ENCODE measurements at regions of chr4 and their contacts with region 1.

Region 1: DNA sequence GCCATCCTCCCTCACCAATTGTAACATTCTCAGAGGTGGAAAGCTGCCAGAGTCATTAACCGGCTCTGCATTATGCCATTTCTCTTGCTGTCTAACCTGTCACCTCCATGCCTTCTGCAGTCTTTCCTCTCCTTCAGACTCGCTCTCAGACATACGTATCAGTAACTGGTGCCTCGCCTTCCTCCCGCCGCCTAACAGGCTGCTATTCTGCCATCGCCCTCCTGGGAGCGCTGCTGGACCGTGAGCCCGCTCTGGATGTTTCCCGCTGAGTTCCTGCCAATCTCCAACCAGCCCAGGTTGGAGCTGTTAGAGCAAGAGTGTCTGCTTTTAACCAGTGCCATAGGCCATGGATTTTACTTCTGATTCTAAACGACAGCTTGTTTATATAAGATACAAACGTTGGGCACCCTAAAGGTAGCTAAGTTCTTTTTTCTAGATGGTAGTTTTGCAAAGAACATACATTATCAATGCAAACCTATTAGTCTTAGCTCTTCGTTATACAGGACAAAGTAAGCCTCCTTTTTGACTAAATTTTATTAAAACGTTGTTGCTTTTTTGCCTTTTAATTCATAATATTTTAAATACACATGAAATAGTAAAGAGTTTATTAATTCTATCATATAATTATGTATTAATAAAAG is 59.5 kb upstream of the NEIL3 start:
- DNase-seq: no peak
- H3K4me3 ChIP-seq: no peak overlapping the region
- H3K27ac ChIP-seq: no peak overlapping the region
- H3K4me1 ChIP-seq: peaks cover 0 to 13% (median 8%) of the 10 kb centered on the region in 3 donors
- H3K27me3 ChIP-seq: peaks cover 0 to 9% (median 0%) of the 10 kb centered on the region in 4 donors
- CTCF ChIP-seq: peak; percentile 33 to 95 (median 86)
- POLR2A ChIP-seq: no peak

Region 2: GRCh38 chr4:177349188-177349587 is 99.0 kb after region 1 on chr4:
- intact Hi-C with region 1: loop called (anchors 5 kb)
- DNase-seq: no peak
- H3K4me3 ChIP-seq: no peak overlapping the region
- H3K27ac ChIP-seq: no peak overlapping the region
- H3K4me1 ChIP-seq: no peaks in the 10 kb centered on the region
- H3K27me3 ChIP-seq: no peaks in the 10 kb centered on the region
- CTCF ChIP-seq: no peak
- POLR2A ChIP-seq: no peak

Region 3: GRCh38 chr4:177546745-177547144 is 296.6 kb after region 1 on chr4:
- intact Hi-C with region 1: loop called (anchors 10 kb)
- DNase-seq: no peak
- H3K4me3 ChIP-seq: no peak overlapping the region
- H3K27ac ChIP-seq: no peak overlapping the region
- H3K4me1 ChIP-seq: no peaks in the 10 kb centered on the region
- H3K27me3 ChIP-seq: no peaks in the 10 kb centered on the region
- CTCF ChIP-seq: peak in 3 of 6 experiments; percentile 10 to 50 (median 23)
- POLR2A ChIP-seq: no peak

Measured in esophagus squamous epithelium (tissue), 5 donors.